H1 (cell line): ENCODE measurements at regions of chr6 and their contacts with region 1.

Region 1: DNA sequence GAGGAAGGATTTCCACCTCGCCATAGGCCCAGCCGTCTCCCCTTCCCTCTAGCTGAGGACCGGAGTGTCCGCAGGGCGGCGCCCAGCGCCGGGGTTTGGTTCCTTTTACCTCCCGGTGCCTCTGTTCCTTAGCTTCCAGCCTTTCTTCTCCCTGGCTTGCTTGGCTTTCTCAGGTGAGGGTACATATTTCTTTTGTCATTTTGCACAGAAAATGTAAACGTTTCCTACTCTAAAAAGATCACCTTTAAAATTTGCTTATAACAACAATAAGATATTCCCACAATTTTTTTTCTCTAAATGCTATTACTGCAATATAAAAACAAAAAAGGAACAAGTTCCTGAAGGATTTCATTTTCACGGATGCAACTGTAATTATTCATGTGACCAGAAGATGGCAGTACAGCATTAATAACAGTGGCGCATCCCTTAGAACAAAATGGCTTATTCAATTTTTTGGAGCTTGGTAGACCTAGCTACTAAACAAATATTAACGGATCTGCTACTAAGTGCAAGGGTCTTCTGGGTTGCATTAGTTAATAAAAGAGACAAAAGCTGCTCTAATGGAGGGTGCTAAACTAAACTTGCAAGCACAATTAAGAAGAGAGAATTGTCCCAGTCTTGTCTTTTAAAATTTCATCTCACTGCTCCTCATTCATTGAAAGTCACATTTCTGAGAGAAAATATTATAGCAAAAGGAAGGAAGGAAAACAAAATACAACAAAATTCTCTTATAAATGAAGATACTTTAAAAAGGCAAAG is 172.9 kb downstream of the ADGRG6 start:
- DNase-seq: peak; percentile 33 to 76
- H3K4me3 ChIP-seq: peak overlapping the region in 1 of 4 experiments; percentile 30; a peak in 1 of 8 replicates
- H3K27ac ChIP-seq: no peak overlapping the region
- H3K4me1 ChIP-seq: peaks cover 0 to 4% (median 0%) of the 10 kb centered on the region in 4 experiments; a peak in 1 of 7 replicates
- H3K27me3 ChIP-seq: no peaks in the 10 kb centered on the region
- CTCF ChIP-seq: peak; percentile 68 to 83 (median 70)
- EP300 ChIP-seq: no peak
- POLR2A ChIP-seq: no peak
- RAD21 ChIP-seq: peak; percentile 80 to 83

Region 2: GRCh38 chr6:142452993-142453392 is 21.7 kb before region 1 on chr6:
- CTCF ChIA-PET with region 1: interaction called, 15 read pairs
- POLR2A ChIA-PET with region 1: no interaction called
- DNase-seq: no peak
- H3K4me3 ChIP-seq: no peak overlapping the region
- H3K27ac ChIP-seq: no peak overlapping the region
- H3K4me1 ChIP-seq: no peaks in the 10 kb centered on the region
- H3K27me3 ChIP-seq: no peaks in the 10 kb centered on the region
- CTCF ChIP-seq: no peak
- EP300 ChIP-seq: no peak
- POLR2A ChIP-seq: no peak
- RAD21 ChIP-seq: no peak

Region 3: GRCh38 chr6:142518115-142518514 is 43.4 kb after region 1 on chr6:
- CTCF ChIA-PET with region 1: interaction called, 12 read pairs
- POLR2A ChIA-PET with region 1: no interaction called
- DNase-seq: no peak
- H3K4me3 ChIP-seq: no peak overlapping the region
- H3K27ac ChIP-seq: no peak overlapping the region
- H3K4me1 ChIP-seq: no peaks in the 10 kb centered on the region
- H3K27me3 ChIP-seq: no peaks in the 10 kb centered on the region
- CTCF ChIP-seq: no peak
- EP300 ChIP-seq: no peak
- POLR2A ChIP-seq: no peak
- RAD21 ChIP-seq: no peak

Region 4: DNA sequence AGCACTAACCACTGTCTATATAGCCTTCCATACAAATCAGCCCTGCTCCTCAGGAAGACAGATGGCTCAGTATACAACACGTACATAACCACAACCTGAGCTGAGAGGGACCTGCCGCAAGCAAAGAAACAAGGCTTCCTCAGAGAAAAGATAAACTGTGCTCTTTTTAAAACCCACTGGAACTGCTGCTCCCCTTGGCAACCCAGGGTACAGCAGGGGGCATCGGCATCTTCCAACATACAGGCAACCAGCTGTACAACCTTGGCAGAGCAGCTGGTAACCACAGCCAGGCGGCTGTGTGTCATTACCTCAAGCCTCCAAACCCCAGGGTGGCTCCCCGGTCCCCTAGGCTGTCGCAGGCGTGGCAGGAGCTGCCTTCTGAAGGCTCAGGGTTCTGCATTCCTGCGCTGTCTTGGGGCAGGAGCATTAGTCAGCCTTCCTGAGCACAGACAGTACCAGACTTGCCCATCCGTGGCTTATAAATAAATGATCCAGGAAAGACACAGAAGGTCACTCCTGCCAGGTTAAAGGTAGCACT is 76.6 kb after region 1 on chr6:
- CTCF ChIA-PET with region 1: interaction called, 11 read pairs
- POLR2A ChIA-PET with region 1: no interaction called
- DNase-seq: no peak
- H3K4me3 ChIP-seq: no peak overlapping the region
- H3K27ac ChIP-seq: no peak overlapping the region
- H3K4me1 ChIP-seq: peaks cover 0 to 6% (median 4%) of the 10 kb centered on the region in 4 experiments; a peak in 5 of 7 replicates
- H3K27me3 ChIP-seq: no peaks in the 10 kb centered on the region
- CTCF ChIP-seq: no peak
- EP300 ChIP-seq: no peak
- POLR2A ChIP-seq: no peak
- RAD21 ChIP-seq: no peak

Region 5: DNA sequence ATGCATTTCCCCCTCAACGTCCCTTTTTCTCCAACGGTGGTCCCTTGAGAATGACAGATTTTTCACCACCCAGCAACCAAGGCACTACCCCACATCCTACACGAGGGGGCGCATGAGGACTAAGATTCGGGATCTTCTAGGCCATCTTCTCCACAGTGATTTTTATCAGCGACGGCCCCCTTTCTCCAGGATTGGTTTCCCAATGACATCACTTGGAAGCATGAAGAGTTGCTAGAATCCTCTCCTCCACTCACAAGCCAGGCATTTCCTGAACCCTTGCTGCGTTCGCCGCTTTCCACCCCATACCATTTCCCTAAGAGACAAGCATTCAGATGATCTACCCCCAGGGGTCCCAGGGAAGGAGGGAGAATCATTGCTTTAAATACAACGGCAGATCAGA is 218.2 kb after region 1 on chr6:
- CTCF ChIA-PET with region 1: interaction called, 20 read pairs
- POLR2A ChIA-PET with region 1: no interaction called
- DNase-seq: peak; percentile 25 to 87
- H3K4me3 ChIP-seq: peak overlapping the region in 1 of 4 experiments; percentile 17; a peak in 3 of 8 replicates
- H3K27ac ChIP-seq: no peak overlapping the region
- H3K4me1 ChIP-seq: peaks cover 0 to 3% (median under 1%) of the 10 kb centered on the region in 4 experiments; a peak in 3 of 7 replicates
- H3K27me3 ChIP-seq: no peaks in the 10 kb centered on the region
- CTCF ChIP-seq: peak; percentile 81 to 90 (median 86)
- EP300 ChIP-seq: no peak
- POLR2A ChIP-seq: no peak
- RAD21 ChIP-seq: peak; percentile 96